ENCODE measurements at regions of chr18 and their contacts with region 1.

Region 1: DNA sequence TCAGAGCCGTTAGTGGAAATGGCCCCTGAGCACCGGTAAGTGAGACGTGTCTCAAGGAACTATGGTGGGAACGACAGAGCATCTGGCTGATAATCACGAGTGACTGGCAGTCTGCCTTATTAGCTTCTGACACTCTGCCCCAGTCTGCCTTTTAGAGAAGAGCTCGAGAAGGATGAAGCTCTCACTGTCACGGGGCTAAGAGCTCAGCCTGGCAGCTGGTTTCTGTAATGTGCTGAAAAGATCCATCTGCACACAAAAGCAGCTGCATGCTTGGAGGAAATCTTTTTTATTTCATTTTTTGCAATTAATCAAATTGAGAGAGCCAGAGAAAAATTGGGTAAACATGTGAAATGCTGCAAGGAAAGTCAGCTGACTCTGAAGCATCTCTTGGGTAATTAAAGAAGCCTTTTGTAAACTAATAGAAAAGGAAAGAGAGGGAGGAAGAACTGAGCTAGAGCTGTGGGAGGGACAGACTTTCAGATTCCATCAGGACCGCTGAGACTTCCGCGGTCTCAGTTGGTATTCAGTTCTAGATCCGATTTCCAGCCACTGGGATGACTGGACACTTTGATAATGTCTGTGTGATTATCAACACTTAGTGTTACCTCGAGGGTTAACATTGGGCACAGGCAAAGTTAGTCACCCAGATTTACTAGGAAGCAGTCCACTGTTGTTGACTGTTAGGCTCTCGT is 24.4 kb downstream of the MBP start:
- DNase-seq: peak; percentile 60
- H3K4me3 ChIP-seq: no peak overlapping the region
- H3K27me3 ChIP-seq: no peaks in the 10 kb centered on the region
- CTCF ChIP-seq: no peak

Region 2: GRCh38 chr18:76905821-76906220 is 202.3 kb before region 1 on chr18:
- CTCF ChIA-PET with region 1: no interaction called
- POLR2A ChIA-PET with region 1: interaction called, 17 read pairs
- DNase-seq: no peak
- H3K4me3 ChIP-seq: no peak overlapping the region
- H3K27me3 ChIP-seq: no peaks in the 10 kb centered on the region
- CTCF ChIP-seq: no peak

Region 3: DNA sequence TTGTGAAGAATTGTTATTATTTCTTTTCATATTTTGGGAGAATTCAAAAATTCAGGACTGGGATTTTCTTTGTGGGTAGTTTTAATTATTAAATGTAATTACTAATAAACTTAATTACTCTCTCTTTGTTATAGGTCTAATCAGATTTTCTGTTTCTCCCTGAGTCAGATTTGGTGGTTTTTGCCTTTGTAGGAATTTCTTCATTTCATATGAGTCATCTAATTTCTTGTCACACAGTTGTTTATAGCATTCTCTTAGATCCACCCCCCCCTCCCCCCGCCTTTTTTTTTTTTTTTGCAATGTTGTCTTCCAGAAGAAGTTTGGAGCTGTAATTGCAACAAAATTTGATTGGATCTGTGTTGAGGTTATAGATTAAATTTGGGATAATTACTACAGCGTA is 115.5 kb after region 1 on chr18:
- CTCF ChIA-PET with region 1: no interaction called
- POLR2A ChIA-PET with region 1: interaction called, 18 read pairs
- DNase-seq: no peak
- H3K4me3 ChIP-seq: no peak overlapping the region
- H3K27me3 ChIP-seq: no peaks in the 10 kb centered on the region
- CTCF ChIP-seq: no peak